AG04450 (cell line): ENCODE measurements at regions of chr11 and their contacts with region 1.

Region 1: DNA sequence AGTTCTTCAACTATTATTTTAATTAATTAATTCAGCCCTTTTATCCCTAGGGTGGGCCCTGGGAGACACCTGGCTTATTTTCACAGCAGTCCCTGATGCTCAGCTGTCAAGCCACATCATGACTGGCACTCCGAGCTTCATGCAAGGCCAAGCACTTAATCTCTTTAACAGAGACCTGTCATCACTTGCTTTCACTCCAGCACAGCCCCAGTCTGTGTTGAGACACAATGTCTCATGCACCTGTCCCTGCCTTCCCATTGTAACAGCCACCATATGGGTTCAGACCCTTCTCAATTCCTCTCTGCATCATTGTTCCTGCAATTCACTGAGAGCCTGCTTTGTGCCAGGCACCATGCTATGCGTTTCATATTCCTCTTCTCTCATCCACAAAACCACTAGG is 222.2 kb upstream of the TENM4 start:
- DNase-seq: no peak
- H3K4me3 ChIP-seq: no peak overlapping the region
- H3K27ac ChIP-seq: no peak overlapping the region
- H3K27me3 ChIP-seq: no peaks in the 10 kb centered on the region
- CTCF ChIP-seq: no peak

Region 2: DNA sequence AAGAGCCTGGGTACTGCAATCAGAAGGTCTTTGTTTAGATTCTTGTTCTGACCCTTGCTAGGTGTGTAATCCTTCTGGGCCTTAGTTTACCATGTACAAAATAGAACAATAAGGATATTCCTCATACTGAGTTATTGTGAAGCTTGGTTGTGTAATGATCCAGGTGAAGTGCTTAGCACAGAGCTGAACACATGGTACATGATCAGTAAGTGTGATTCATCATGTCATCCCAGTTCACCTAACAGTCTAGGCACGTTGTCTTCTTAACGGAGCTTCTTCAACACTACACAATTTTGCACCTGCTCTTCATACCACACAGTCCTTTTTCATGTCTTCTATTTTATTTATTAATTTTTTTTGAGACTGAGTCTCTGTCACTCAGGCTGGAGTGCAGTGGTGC is 12.1 kb after region 1 on chr11:
- CTCF ChIA-PET with region 1: no interaction called
- POLR2A ChIA-PET with region 1: no interaction called
- DNase-seq: no peak
- H3K4me3 ChIP-seq: no peak overlapping the region
- H3K27ac ChIP-seq: no peak overlapping the region
- H3K27me3 ChIP-seq: no peaks in the 10 kb centered on the region
- CTCF ChIP-seq: no peak

Region 3: GRCh38 chr11:80007616-80008015 is 344.6 kb after region 1 on chr11:
- CTCF ChIA-PET with region 1: interaction called, 10 read pairs
- POLR2A ChIA-PET with region 1: no interaction called
- DNase-seq: no peak
- H3K4me3 ChIP-seq: no peak overlapping the region
- H3K27ac ChIP-seq: no peak overlapping the region
- H3K27me3 ChIP-seq: no peaks in the 10 kb centered on the region
- CTCF ChIP-seq: no peak